ENCODE measurements at regions of chr13 and their contacts with region 1.

Region 1: DNA sequence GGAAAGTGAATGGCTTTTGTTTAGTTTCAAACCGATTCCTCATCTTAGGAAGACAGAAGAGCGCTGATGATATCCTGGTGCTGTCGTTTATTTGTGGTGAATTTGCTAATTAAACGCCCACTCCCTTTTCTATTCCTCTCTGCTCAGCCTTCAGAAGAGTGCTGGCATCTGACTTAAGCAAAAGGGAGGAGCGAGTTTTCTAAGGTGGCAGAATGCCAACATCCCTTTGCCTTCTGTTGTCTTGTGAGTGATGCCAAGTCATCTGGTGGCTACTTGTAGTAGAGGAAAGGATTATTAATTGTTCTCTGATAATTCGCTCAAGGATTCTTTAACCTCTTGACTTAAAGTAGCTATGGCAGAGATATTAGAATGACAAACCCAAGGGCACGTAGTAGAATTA is 68.1 kb downstream of the ERCC5 start:
- DNase-seq: no peak
- ATAC-seq: no peak
- H3K4me3 ChIP-seq: no peak overlapping the region
- H3K27ac ChIP-seq: no peak overlapping the region
- H3K4me1 ChIP-seq: no peaks in the 10 kb centered on the region
- H3K27me3 ChIP-seq: peaks cover 0 to 1% of the 10 kb centered on the region in 2 experiments; a peak in 2 of 5 replicates
- CTCF ChIP-seq: no peak
- EP300 ChIP-seq: no peak
- POLR2A ChIP-seq: no peak
- RAD21 ChIP-seq: no peak

Region 2: GRCh38 chr13:102800145-102801041 is 113.5 kb before region 1 on chr13:
- CTCF ChIA-PET with region 1: no interaction called
- POLR2A ChIA-PET with region 1: no interaction called
- in situ Hi-C with region 1: no loop called
- intact Hi-C with region 1: no loop called
- DNase-seq: peak; percentile 66
- ATAC-seq: peak; percentile 88
- H3K4me3 ChIP-seq: peak overlapping the region; percentile 70 to 89 (median 83)
- H3K27ac ChIP-seq: peak overlapping the region; percentile 78
- H3K4me1 ChIP-seq: peaks cover 24% of the 10 kb centered on the region
- H3K27me3 ChIP-seq: no peaks in the 10 kb centered on the region; a peak in 1 of 5 replicates
- CTCF ChIP-seq: peak; percentile 89
- EP300 ChIP-seq: no peak
- POLR2A ChIP-seq: peak; percentile 37 to 67; a peak in 2 of 4 replicates
- RAD21 ChIP-seq: peak; percentile 70

Region 3: DNA sequence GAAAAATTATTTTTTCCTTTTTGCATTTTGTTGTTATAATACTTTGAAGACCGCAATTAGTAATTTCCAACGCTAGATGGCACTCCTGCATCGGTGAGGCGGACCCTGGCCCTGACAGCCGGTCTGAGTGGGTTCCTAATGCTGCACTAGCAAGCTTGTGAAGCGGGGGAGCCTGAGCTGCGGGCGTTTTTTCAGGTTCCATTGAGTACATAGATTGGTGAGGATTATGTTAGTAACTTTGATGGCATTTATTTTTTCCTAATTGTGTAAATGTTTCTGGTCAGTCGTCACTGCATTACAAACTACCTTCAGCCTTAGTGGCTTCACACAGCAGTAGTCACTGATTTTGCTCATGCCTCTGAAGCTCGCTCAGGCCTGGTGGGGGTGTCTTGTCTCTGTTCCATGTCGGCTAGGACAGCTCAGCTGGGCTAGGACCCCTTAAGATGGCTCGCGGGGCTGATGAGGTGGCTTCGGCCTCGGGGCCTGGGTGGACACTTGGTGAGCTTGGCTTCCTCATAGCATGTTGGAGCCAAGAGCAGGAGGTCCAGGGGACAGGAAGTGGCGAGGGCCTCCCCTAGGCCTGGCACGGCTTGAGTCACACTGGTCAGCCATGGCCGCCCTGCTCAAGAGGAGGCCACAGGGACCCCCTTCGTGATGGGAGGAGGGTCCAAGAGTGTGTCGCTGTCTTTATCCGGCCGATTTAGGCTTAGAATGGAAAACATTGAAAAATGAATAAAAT is 43.1 kb before region 1 on chr13:
- CTCF ChIA-PET with region 1: no interaction called
- POLR2A ChIA-PET with region 1: no interaction called
- in situ Hi-C with region 1: no loop called
- intact Hi-C with region 1: loop called (anchors 5 kb)
- DNase-seq: peak; percentile 39
- ATAC-seq: peak; percentile 94
- H3K4me3 ChIP-seq: no peak overlapping the region
- H3K27ac ChIP-seq: no peak overlapping the region
- H3K4me1 ChIP-seq: no peaks in the 10 kb centered on the region
- H3K27me3 ChIP-seq: no peaks in the 10 kb centered on the region
- CTCF ChIP-seq: peak; percentile 81
- EP300 ChIP-seq: no peak
- POLR2A ChIP-seq: no peak
- RAD21 ChIP-seq: peak; percentile 66

Region 4: DNA sequence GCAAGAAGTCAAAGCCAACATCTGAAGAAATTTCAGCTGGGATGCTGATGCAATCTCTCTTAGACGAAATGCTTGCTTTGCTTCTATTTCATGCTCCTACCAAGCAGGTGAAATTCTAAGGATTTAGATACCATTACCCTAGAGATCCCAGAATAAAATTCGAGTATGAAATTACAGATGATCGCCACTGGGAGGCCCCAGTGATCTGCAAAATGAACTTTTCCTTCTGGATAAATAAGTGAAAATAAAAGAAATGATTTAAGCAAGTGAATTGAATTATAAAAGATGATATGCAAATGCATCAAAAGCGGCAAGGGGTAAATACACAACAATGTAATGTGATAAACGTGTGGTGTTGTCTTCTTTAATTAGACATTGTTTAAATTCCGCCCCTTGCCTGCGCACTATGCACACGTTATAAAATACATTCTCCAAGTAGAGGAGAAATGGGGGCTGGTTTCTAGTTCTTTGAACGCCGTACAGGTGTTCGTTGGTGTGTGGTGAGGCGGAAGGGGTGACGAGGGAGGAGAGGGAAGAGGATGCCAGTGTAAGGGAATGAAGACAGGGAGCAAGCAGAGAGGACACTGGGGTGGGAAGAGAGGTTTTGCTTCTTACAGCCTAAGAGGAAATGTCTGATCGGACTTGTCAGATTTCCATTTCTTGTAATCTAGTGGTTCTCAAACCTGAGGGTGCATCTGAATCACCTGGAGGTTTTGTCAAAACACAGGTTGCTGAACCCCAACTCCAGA is 10.1 kb before region 1 on chr13:
- CTCF ChIA-PET with region 1: no interaction called
- POLR2A ChIA-PET with region 1: no interaction called
- in situ Hi-C with region 1: no loop called
- intact Hi-C with region 1: no loop called
- DNase-seq: no peak
- ATAC-seq: peak; percentile 46
- H3K4me3 ChIP-seq: no peak overlapping the region
- H3K27ac ChIP-seq: no peak overlapping the region
- H3K4me1 ChIP-seq: peaks cover 55% of the 10 kb centered on the region
- H3K27me3 ChIP-seq: no peaks in the 10 kb centered on the region
- CTCF ChIP-seq: no peak
- EP300 ChIP-seq: no peak
- POLR2A ChIP-seq: no peak
- RAD21 ChIP-seq: no peak

Region 5: DNA sequence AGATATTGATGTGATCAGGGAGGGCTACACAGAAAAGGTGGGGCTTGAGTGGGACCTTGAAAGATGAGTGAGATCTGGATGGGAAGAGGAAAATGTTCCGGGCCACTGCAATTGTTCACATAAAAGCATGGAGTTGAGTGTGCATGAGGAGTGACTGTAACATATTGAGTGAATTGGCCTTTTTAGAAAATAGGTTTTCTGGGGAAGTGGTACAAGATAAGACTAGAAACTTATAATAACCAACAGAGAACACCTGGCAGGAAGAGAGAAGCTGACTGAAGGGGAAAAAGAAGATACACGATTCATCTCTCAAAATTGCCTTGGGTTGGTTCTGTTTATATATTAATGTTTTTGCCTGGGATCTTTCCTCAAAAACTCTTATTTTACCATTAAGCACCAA is 120.1 kb after region 1 on chr13:
- CTCF ChIA-PET with region 1: no interaction called
- POLR2A ChIA-PET with region 1: no interaction called
- in situ Hi-C with region 1: no loop called
- intact Hi-C with region 1: loop called (anchors 1 kb)
- DNase-seq: no peak
- ATAC-seq: no peak
- H3K4me3 ChIP-seq: no peak overlapping the region
- H3K27ac ChIP-seq: no peak overlapping the region
- H3K4me1 ChIP-seq: no peaks in the 10 kb centered on the region
- H3K27me3 ChIP-seq: no peaks in the 10 kb centered on the region
- CTCF ChIP-seq: no peak
- EP300 ChIP-seq: no peak
- POLR2A ChIP-seq: no peak
- RAD21 ChIP-seq: no peak

Region 6: DNA sequence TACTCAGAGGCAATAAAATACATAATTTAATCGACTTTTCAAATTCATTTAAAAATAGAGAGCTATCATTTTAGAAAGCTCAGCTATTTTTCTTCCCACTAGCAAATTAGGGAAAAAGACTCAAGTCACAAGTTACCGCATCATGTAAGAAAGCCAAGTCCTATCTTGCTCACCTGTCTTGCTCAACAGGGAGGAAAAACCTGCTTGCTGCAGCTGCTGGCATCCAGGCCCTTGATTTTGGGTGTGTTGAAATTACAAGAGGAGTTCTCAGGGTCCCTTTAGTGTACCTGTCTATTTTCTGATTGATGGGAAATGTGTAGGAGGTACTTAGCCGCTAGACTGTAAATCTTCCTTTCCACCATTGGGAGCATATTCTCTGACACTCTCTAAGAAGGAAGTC is 130.1 kb after region 1 on chr13:
- CTCF ChIA-PET with region 1: no interaction called
- POLR2A ChIA-PET with region 1: no interaction called
- in situ Hi-C with region 1: no loop called
- intact Hi-C with region 1: no loop called
- DNase-seq: no peak
- ATAC-seq: no peak
- H3K4me3 ChIP-seq: no peak overlapping the region
- H3K27ac ChIP-seq: no peak overlapping the region
- H3K4me1 ChIP-seq: no peaks in the 10 kb centered on the region
- H3K27me3 ChIP-seq: no peaks in the 10 kb centered on the region
- CTCF ChIP-seq: no peak
- EP300 ChIP-seq: no peak
- POLR2A ChIP-seq: no peak
- RAD21 ChIP-seq: no peak

Region 7: GRCh38 chr13:103140001-103140671 is 226.2 kb after region 1 on chr13:
- CTCF ChIA-PET with region 1: no interaction called
- POLR2A ChIA-PET with region 1: no interaction called
- in situ Hi-C with region 1: loop called (anchors 25 kb)
- intact Hi-C with region 1: loop called (anchors 2 kb)
- DNase-seq: peak; percentile 12
- ATAC-seq: peak; percentile 86
- H3K4me3 ChIP-seq: no peak overlapping the region
- H3K27ac ChIP-seq: no peak overlapping the region
- H3K4me1 ChIP-seq: no peaks in the 10 kb centered on the region
- H3K27me3 ChIP-seq: no peaks in the 10 kb centered on the region; a peak in 1 of 5 replicates
- CTCF ChIP-seq: peak; percentile 54
- EP300 ChIP-seq: no peak
- POLR2A ChIP-seq: no peak
- RAD21 ChIP-seq: no peak

Region 8: GRCh38 chr13:103188713-103189326 is 274.9 kb after region 1 on chr13:
- CTCF ChIA-PET with region 1: no interaction called
- POLR2A ChIA-PET with region 1: no interaction called
- in situ Hi-C with region 1: no loop called
- intact Hi-C with region 1: loop called (anchors 1 kb)
- DNase-seq: no peak
- ATAC-seq: no peak
- H3K4me3 ChIP-seq: no peak overlapping the region
- H3K27ac ChIP-seq: no peak overlapping the region
- H3K4me1 ChIP-seq: peaks cover 1% of the 10 kb centered on the region; the same call in 1 of the 2 replicates
- H3K27me3 ChIP-seq: no peaks in the 10 kb centered on the region
- CTCF ChIP-seq: 0 out of 2 replicates have a peak, but pooled peaks have one; percentile 31
- EP300 ChIP-seq: no peak
- POLR2A ChIP-seq: no peak
- RAD21 ChIP-seq: no peak

Measured in HepG2 (cell line).